ENCODE measurements at regions of chr19 and their contacts with region 1.

Region 1: GRCh38 chr19:54035215-54036178 is 28.2 kb downstream of the VSTM1 start:
- DNase-seq: peak; percentile 78
- ATAC-seq: peak; percentile 94
- H3K4me3 ChIP-seq: no peak overlapping the region
- H3K27ac ChIP-seq: peak overlapping the region; percentile 89
- H3K4me1 ChIP-seq: no peaks in the 10 kb centered on the region
- H3K27me3 ChIP-seq: no peaks in the 10 kb centered on the region
- CTCF ChIP-seq: no peak
- POLR2A ChIP-seq: no peak
- RAD21 ChIP-seq: no peak

Region 2: DNA sequence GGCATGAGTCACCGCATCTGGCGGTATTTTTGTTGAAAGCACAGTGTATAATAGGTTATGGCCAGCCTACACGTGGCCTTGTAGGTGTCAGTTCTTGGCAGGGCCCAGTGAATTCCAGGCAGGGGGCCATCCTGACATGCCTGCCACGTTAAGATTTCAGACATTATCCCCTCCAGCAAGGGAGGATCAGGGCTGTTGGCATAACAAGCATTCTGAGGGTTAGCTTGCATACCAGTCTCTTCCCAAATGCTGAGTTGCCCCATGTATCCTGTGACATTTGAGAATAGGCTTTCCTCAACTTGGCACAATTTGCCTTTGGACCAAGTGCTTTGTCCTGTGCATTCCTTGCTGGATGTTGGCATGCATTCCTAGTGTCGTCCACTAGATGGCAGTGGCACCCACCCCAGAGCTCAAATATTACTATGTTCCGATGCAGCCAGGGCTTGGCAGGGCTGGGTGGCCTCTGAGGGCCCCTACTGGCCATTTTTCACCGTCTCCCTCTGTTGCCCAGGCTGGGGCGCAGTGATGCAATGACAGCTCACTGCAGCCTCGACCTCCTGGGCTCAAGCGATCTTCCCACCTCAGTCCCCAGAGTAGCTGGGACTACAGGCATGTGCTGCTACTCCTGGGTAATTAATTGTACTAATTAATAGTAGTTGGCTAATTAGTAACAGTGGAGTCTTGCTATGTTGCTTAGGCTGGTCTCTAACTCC is 242.6 kb before region 1 on chr19:
- CTCF ChIA-PET with region 1: interaction called, 12 read pairs
- POLR2A ChIA-PET with region 1: no interaction called
- dilution Hi-C with region 1: no loop called
- in situ Hi-C with region 1: no loop called
- intact Hi-C with region 1: loop called (anchors 5 kb)
- DNase-seq: peak; percentile 75
- ATAC-seq: peak; percentile 100
- H3K4me3 ChIP-seq: no peak overlapping the region
- H3K27ac ChIP-seq: no peak overlapping the region
- H3K4me1 ChIP-seq: no peaks in the 10 kb centered on the region
- H3K27me3 ChIP-seq: no peaks in the 10 kb centered on the region
- CTCF ChIP-seq: peak; percentile 96
- POLR2A ChIP-seq: no peak
- RAD21 ChIP-seq: peak; percentile 74

Region 3: DNA sequence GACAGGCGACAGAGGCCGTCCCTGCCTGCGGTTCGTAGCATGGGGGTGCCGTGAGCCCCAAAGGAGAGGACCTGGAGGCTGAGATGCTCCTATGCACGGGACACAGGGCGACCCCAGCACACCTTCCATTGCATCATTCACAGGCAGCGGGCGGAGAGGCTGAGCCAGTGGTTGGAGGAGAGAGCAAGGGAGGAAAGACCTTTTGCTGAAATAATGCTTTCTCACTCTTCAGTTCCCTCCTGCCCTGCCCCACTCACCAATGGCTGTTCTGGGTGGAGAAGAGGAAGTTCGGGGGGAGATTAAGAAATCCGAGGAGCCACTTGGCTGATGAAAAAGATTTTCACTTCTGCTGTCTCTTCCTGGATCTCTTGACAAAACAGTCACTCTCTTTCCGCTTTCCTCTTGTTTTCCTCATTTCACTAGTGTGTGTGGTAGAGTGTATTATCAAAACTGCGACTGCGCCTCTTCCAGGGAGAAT is 211.3 kb before region 1 on chr19 and contains the start of gene NLRP12:
- CTCF ChIA-PET with region 1: no interaction called
- POLR2A ChIA-PET with region 1: interaction called, 12 read pairs
- dilution Hi-C with region 1: no loop called
- in situ Hi-C with region 1: no loop called
- intact Hi-C with region 1: no loop called
- DNase-seq: no peak
- ATAC-seq: no peak
- H3K4me3 ChIP-seq: no peak within 1 kb of the TSS
- H3K27ac ChIP-seq: no peak within 1 kb of the TSS
- H3K4me1 ChIP-seq: no peaks in the 10 kb centered on the region
- H3K27me3 ChIP-seq: no peaks in the 10 kb centered on the region; the same call in 1 of the 2 replicates
- CTCF ChIP-seq: no peak
- POLR2A ChIP-seq: no peak
- RAD21 ChIP-seq: no peak
- total RNA-seq, gene NLRP12: not detected in 2 replicates

Measured in IMR-90 (cell line).